ENCODE measurements at regions of chr2 and their contacts with region 1.

Region 1: GRCh38 chr2:55268907-55269644 is at the start of gene MTIF2:
- DNase-seq: peak; percentile 88 to 91
- ATAC-seq: peak; percentile 94 to 98 (median 98)
- H3K4me3 ChIP-seq: peak within 1 kb of the TSS; percentile 60
- H3K4me3 Mint-ChIP-seq: peak within 1 kb of the TSS; percentile 100
- H3K27ac ChIP-seq: peak within 1 kb of the TSS; percentile 83
- H3K27ac Mint-ChIP-seq: peak within 1 kb of the TSS; percentile 86 to 97
- H3K4me1 ChIP-seq: peaks cover 11% of the 10 kb centered on the region
- H3K4me1 Mint-ChIP-seq: peaks cover 17 to 19% of the 10 kb centered on the region in 2 donors
- H3K27me3 ChIP-seq: no peaks in the 10 kb centered on the region
- H3K27me3 Mint-ChIP-seq: peaks cover 0 to 2% of the 10 kb centered on the region in 2 donors
- CTCF ChIP-seq: no peak
- total RNA-seq, gene MTIF2: 19.8 to 26.6 (median 20.8) TPM

Region 2: GRCh38 chr2:55282110-55282917 is 13.2 kb after region 1 on chr2:
- intact Hi-C with region 1: loop called (anchors 1 kb)
- DNase-seq: peak; percentile 79 to 94
- ATAC-seq: peak; percentile 96 to 100 (median 97)
- H3K4me3 ChIP-seq: peak overlapping the region; percentile 77
- H3K4me3 Mint-ChIP-seq: peak overlapping the region; percentile 93
- H3K27ac ChIP-seq: peak overlapping the region; percentile 80
- H3K27ac Mint-ChIP-seq: peak overlapping the region; percentile 92 to 95
- H3K4me1 ChIP-seq: peaks cover 14% of the 10 kb centered on the region
- H3K4me1 Mint-ChIP-seq: peaks cover 16% of the 10 kb centered on the region in 2 donors
- H3K27me3 ChIP-seq: no peaks in the 10 kb centered on the region
- H3K27me3 Mint-ChIP-seq: no peaks in the 10 kb centered on the region
- CTCF ChIP-seq: no peak

Region 3: GRCh38 chr2:55345064-55345463 is 76.0 kb after region 1 on chr2:
- intact Hi-C with region 1: no loop called
- DNase-seq: no peak
- ATAC-seq: no peak
- H3K4me3 ChIP-seq: no peak overlapping the region
- H3K4me3 Mint-ChIP-seq: no peak overlapping the region
- H3K27ac ChIP-seq: no peak overlapping the region
- H3K27ac Mint-ChIP-seq: no peak overlapping the region
- H3K4me1 ChIP-seq: no peaks in the 10 kb centered on the region
- H3K4me1 Mint-ChIP-seq: no peaks in the 10 kb centered on the region
- H3K27me3 ChIP-seq: no peaks in the 10 kb centered on the region
- H3K27me3 Mint-ChIP-seq: no peaks in the 10 kb centered on the region
- CTCF ChIP-seq: no peak

Measured in natural killer cell (primary cell).